Lower lobe of right lung (tissue), 2 donors: ENCODE measurements at regions of chr10 and their contacts with region 1.

Region 1: DNA sequence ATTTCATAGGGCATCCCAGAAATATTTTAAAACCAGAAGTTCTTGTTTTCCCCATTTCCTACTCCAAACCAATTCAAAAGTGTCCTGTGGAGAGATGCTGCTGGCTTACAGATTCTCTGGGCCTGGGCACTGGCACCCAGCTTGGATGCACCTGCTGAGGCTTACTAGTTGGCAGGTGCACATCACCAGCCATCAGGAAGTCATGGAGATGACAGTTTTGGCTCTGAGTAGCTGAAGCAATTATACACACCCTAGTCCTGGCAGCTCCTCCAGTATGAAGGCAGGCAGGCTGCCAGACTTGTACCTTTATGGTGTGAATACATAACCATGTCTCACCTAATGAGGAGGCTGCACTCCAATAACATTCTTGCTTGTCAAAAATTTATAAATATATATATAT is 276.6 kb upstream of the GHITM start:
- DNase-seq: no peak
- ATAC-seq: no peak
- H3K4me3 ChIP-seq: no peak overlapping the region
- H3K27ac ChIP-seq: no peak overlapping the region
- H3K4me1 ChIP-seq: no peaks in the 10 kb centered on the region
- H3K27me3 ChIP-seq: no peaks in the 10 kb centered on the region
- CTCF ChIP-seq: no peak

Region 2: GRCh38 chr10:82796510-82796909 is 1066.2 kb before region 1 on chr10:
- intact Hi-C with region 1: loop called (anchors 10 kb)
- DNase-seq: no peak
- ATAC-seq: no peak
- H3K4me3 ChIP-seq: no peak overlapping the region
- H3K27ac ChIP-seq: no peak overlapping the region
- H3K4me1 ChIP-seq: no peaks in the 10 kb centered on the region
- H3K27me3 ChIP-seq: no peaks in the 10 kb centered on the region
- CTCF ChIP-seq: peak; percentile 20

Region 3: GRCh38 chr10:83954193-83954799 is 91.6 kb after region 1 on chr10:
- intact Hi-C with region 1: no loop called
- DNase-seq: no peak
- ATAC-seq: no peak
- H3K4me3 ChIP-seq: no peak overlapping the region
- H3K27ac ChIP-seq: no peak overlapping the region
- H3K4me1 ChIP-seq: no peaks in the 10 kb centered on the region
- H3K27me3 ChIP-seq: no peaks in the 10 kb centered on the region
- CTCF ChIP-seq: no peak